ENCODE measurements at regions of chr2 and their contacts with region 1.

Region 1: GRCh38 chr2:158968396-158969161 is at the start of gene TANC1:
- DNase-seq: peak; percentile 77 to 90
- H3K4me3 ChIP-seq: peak within 1 kb of the TSS; percentile 83
- H3K27ac ChIP-seq: peak within 1 kb of the TSS; percentile 48
- H3K4me1 ChIP-seq: peaks cover 34% of the 10 kb centered on the region
- H3K27me3 ChIP-seq: no peaks in the 10 kb centered on the region
- CTCF ChIP-seq: no peak
- total RNA-seq, gene TANC1: 21.2 and 26.0 TPM in 2 replicates

Region 2: GRCh38 chr2:158903711-158904443 is 64.7 kb before region 1 on chr2:
- CTCF ChIA-PET with region 1: no interaction called
- POLR2A ChIA-PET with region 1: no interaction called
- intact Hi-C with region 1: loop called (anchors 1 kb)
- DNase-seq: no peak
- H3K4me3 ChIP-seq: no peak overlapping the region
- H3K27ac ChIP-seq: no peak overlapping the region
- H3K4me1 ChIP-seq: no peaks in the 10 kb centered on the region
- H3K27me3 ChIP-seq: no peaks in the 10 kb centered on the region
- CTCF ChIP-seq: no peak

Region 3: GRCh38 chr2:158990397-158991209 is 22.0 kb after region 1 on chr2:
- CTCF ChIA-PET with region 1: interaction called, 21 read pairs
- POLR2A ChIA-PET with region 1: interaction called, 4 read pairs
- intact Hi-C with region 1: no loop called
- DNase-seq: peak; percentile 32 to 95
- H3K4me3 ChIP-seq: no peak overlapping the region
- H3K27ac ChIP-seq: peak overlapping the region; percentile 78
- H3K4me1 ChIP-seq: peaks cover 71% of the 10 kb centered on the region
- H3K27me3 ChIP-seq: no peaks in the 10 kb centered on the region
- CTCF ChIP-seq: no peak

Region 4: GRCh38 chr2:159035790-159036411 is 67.3 kb after region 1 on chr2:
- CTCF ChIA-PET with region 1: no interaction called
- POLR2A ChIA-PET with region 1: interaction called, 17 read pairs
- intact Hi-C with region 1: loop called (anchors 5 kb)
- DNase-seq: peak; percentile 43 to 62
- H3K4me3 ChIP-seq: no peak overlapping the region
- H3K27ac ChIP-seq: peak overlapping the region; percentile 19; the same call in 1 of the 2 replicates
- H3K4me1 ChIP-seq: peaks cover 14% of the 10 kb centered on the region
- H3K27me3 ChIP-seq: no peaks in the 10 kb centered on the region
- CTCF ChIP-seq: peak; percentile 57

Region 5: DNA sequence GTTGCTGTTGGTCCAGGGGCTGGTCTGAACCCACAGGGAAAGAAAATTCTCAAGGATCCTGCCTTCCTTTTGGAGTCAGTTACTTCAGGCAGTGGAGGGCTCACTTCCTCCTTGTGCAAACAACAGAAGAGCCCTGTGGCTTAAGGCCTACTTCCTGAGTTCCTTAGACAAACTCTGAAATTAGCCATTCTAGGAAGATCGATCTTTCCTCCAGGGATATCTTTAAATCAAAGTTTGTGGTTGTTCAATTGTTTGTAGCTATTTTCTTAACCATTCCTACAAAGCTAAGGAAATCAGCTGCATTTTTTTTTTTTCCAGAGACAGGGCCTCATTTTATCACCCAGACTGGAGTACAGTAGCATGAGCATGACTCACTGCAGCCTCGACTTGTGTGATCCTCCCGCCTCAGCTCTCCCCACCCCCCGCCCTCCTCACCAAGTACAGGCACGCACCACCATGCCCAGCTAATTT is 155.9 kb after region 1 on chr2:
- CTCF ChIA-PET with region 1: interaction called, 17 read pairs
- POLR2A ChIA-PET with region 1: no interaction called
- intact Hi-C with region 1: loop called (anchors 2 kb)
- DNase-seq: peak; percentile 22 to 86
- H3K4me3 ChIP-seq: no peak overlapping the region
- H3K27ac ChIP-seq: peak overlapping the region; percentile 77
- H3K4me1 ChIP-seq: peaks cover 31% of the 10 kb centered on the region
- H3K27me3 ChIP-seq: no peaks in the 10 kb centered on the region
- CTCF ChIP-seq: no peak